HEK293 (cell line): ENCODE measurements at regions of chr7 and their contacts with region 1.

Region 1: GRCh38 chr7:32846701-32847100 is 44.9 kb downstream of the KBTBD2 start:
- H3K4me3 ChIP-seq: no peak overlapping the region
- H3K27ac ChIP-seq: no peak overlapping the region
- H3K4me1 ChIP-seq: no peaks in the 10 kb centered on the region
- CTCF ChIP-seq: no peak

Region 2: DNA sequence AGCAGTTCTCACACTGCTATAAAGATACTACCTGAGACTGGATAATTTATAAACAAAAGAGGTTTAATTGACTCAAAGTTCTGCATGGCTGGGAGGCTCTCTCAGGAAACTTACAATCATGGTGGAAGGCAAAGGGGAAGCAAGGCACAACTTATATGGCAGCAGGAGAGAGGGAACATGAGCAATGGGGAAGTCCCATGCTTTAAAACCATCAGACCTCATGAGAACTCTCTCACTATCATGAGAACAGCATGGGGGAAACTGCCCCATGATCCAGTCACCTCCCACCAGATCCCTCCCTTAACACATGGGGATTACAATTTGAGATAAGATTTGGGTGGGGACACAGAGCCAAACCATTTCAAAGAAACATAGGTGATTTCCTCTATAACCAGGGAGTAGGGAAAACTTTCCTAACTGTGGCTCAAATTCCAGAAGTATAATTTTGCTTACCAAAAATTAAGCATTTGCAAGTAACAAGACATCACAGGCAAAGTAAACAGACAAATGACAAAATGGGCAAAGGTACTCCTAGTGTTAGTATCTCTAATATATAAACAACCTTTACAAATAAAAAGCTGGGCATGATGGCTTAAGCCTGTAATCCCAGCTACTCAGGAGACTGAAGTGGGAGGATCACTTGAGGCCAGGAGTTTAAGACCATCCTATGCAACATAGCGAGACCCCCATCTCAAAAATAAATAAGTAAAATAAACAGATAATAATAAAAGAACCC is 43.1 kb before region 1 on chr7:
- CTCF ChIA-PET with region 1: interaction called, 20 read pairs
- POLR2A ChIA-PET with region 1: no interaction called
- H3K4me3 ChIP-seq: no peak overlapping the region
- H3K27ac ChIP-seq: no peak overlapping the region
- H3K4me1 ChIP-seq: no peaks in the 10 kb centered on the region
- CTCF ChIP-seq: no peak

Region 3: DNA sequence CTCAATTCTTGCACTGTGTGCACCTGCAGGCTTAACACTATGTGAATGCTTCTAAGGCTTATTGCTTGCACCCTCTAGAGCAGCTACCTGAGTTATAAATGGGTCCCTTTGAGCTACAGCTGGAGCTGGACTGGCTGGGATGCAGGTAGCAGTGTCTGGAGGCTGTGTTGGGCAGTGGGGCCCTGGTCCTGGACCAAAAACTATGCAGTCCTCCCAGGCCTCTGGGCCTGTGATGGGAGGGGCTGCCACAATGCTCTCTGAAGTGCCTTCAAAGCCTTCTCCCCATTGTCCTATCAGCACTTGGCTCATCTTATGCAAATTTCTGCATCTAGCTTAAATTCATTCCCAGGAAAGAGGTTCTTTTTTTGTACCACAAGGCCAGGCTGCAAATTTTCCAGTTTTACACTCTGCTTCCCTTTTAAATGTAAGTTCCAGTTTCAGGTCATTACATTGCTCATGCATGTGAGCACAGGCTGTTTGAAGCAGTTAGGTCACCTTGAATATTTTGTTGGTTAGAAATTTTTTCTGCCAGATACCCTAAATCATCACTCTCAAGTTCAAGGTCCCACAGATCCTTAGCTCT is 18.8 kb after region 1 on chr7:
- CTCF ChIA-PET with region 1: interaction called, 26 read pairs
- POLR2A ChIA-PET with region 1: no interaction called
- H3K4me3 ChIP-seq: no peak overlapping the region
- H3K27ac ChIP-seq: no peak overlapping the region
- H3K4me1 ChIP-seq: no peaks in the 10 kb centered on the region
- CTCF ChIP-seq: no peak

Region 4: DNA sequence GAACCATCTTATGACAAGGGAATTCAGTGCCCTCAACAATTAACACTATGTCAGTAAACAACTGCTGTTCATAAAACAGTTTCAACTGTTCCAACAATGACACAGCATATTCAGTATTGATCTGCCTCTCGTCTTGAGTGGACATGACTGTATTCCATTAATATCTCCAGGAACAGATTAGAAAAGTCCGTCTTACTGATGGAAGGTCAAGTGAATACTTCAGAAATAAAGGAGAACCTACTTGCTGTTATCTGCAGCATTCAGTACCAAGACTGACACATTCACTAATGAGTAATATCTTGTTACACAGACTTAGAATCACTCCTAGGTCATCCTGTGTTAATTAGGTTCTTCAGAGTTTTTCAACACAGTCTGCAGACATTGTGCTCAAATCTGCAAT is 32.8 kb after region 1 on chr7:
- CTCF ChIA-PET with region 1: interaction called, 23 read pairs
- POLR2A ChIA-PET with region 1: no interaction called
- H3K4me3 ChIP-seq: no peak overlapping the region
- H3K27ac ChIP-seq: no peak overlapping the region
- H3K4me1 ChIP-seq: peaks cover 18% of the 10 kb centered on the region
- CTCF ChIP-seq: no peak

Region 5: GRCh38 chr7:32942786-32943653 is 96.3 kb after region 1 on chr7:
- CTCF ChIA-PET with region 1: interaction called, 15 read pairs
- POLR2A ChIA-PET with region 1: no interaction called
- H3K4me3 ChIP-seq: peak overlapping the region; percentile 71
- H3K27ac ChIP-seq: peak overlapping the region; percentile 85
- H3K4me1 ChIP-seq: no peaks in the 10 kb centered on the region
- CTCF ChIP-seq: no peak

Region 6: GRCh38 chr7:33109005-33109757 is 262.5 kb after region 1 on chr7 and contains the start of gene RP9:
- CTCF ChIA-PET with region 1: interaction called, 22 read pairs
- POLR2A ChIA-PET with region 1: no interaction called
- H3K4me3 ChIP-seq: peak within 1 kb of the TSS; percentile 93
- H3K27ac ChIP-seq: peak within 1 kb of the TSS; percentile 91
- H3K4me1 ChIP-seq: peaks cover 10% of the 10 kb centered on the region
- CTCF ChIP-seq: peak; percentile 68